PC-9 (cell line): ENCODE measurements at regions of chr21 and their contacts with region 1.

Region 1: DNA sequence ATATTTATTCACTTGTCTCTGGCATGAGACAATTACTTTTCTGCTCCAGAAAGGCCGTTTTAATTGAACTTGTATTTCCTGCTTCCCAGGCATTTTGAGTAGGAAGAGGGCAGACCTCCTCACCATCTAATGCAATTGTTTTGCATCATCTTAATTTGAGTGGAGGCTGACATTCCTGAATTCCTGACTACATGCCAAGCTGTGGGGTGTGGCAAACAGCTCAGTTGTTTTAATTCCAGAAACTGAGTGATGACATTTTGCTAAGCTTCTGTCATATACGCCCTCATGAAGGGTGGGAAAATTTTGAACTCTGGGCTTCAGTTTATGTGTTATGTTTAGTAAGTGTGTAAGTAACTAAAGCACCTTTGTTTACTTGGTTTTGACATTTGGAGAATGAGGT is 125.4 kb upstream of the USP25 start:
- DNase-seq: peak; percentile 61 to 82
- H3K4me3 ChIP-seq: no peak overlapping the region
- H3K27ac ChIP-seq: peak overlapping the region; percentile 50
- H3K4me1 ChIP-seq: peaks cover 14% of the 10 kb centered on the region
- H3K27me3 ChIP-seq: no peaks in the 10 kb centered on the region
- CTCF ChIP-seq: no peak

Region 2: DNA sequence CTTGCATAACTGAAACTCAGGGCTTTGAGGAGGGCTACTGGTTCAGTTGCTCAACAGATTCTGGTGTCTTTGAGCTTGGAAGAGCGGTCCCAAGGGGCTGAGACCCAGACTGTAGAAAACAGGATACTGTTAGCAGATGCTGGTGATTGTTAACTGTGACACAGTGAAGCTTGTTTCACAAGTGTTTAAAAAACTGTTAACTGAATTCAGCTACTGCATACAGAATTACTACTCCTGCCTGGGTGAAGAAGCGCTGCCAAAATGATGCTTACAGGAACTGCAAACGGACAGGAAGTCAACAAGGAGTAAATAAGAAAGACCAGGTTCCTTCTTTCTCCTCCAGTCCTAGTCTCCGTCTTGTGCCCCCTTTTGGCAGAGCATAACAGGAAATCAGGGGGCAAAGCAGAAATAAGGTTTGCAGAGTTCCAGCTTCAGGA is 70.0 kb before region 1 on chr21:
- CTCF ChIA-PET with region 1: no interaction called
- POLR2A ChIA-PET with region 1: no interaction called
- intact Hi-C with region 1: no loop called
- DNase-seq: no peak
- H3K4me3 ChIP-seq: no peak overlapping the region
- H3K27ac ChIP-seq: no peak overlapping the region
- H3K4me1 ChIP-seq: no peaks in the 10 kb centered on the region
- H3K27me3 ChIP-seq: no peaks in the 10 kb centered on the region
- CTCF ChIP-seq: no peak

Region 3: GRCh38 chr21:15617964-15618363 is 13.5 kb after region 1 on chr21:
- CTCF ChIA-PET with region 1: no interaction called
- POLR2A ChIA-PET with region 1: no interaction called
- intact Hi-C with region 1: loop called (anchors 1 kb)
- DNase-seq: peak; percentile 57 to 61
- H3K4me3 ChIP-seq: no peak overlapping the region
- H3K27ac ChIP-seq: peak overlapping the region; percentile 52
- H3K4me1 ChIP-seq: peaks cover 13% of the 10 kb centered on the region
- H3K27me3 ChIP-seq: no peaks in the 10 kb centered on the region
- CTCF ChIP-seq: no peak

Region 4: DNA sequence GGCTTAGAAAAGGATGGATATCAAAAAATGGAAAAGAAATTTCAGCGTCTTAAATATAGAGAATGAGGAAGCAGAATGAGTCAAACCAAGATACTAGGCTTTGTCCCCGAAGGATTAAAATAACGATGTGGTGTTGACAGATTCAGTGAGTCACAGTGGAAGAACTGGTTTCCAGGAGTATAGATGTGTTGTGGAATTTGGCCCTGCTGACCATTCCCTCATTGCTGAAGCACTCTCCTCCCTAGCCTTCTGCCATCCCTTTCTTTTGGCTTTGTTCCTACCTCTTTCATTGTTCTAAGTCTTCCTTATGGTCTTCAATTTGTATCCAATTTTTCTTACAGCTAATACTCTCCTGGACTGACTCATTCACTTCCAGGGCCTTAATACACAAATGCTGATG is 102.3 kb after region 1 on chr21:
- CTCF ChIA-PET with region 1: no interaction called
- POLR2A ChIA-PET with region 1: no interaction called
- intact Hi-C with region 1: no loop called
- DNase-seq: peak; percentile 59 to 92
- H3K4me3 ChIP-seq: no peak overlapping the region
- H3K27ac ChIP-seq: peak overlapping the region; percentile 60
- H3K4me1 ChIP-seq: peaks cover 19% of the 10 kb centered on the region
- H3K27me3 ChIP-seq: no peaks in the 10 kb centered on the region
- CTCF ChIP-seq: no peak